ENCODE measurements at regions of chr5 and their contacts with region 1.

Region 1: GRCh38 chr5:68137511-68138140 is 77.9 kb upstream of the PIK3R1 start:
- DNase-seq: no peak

Region 2: DNA sequence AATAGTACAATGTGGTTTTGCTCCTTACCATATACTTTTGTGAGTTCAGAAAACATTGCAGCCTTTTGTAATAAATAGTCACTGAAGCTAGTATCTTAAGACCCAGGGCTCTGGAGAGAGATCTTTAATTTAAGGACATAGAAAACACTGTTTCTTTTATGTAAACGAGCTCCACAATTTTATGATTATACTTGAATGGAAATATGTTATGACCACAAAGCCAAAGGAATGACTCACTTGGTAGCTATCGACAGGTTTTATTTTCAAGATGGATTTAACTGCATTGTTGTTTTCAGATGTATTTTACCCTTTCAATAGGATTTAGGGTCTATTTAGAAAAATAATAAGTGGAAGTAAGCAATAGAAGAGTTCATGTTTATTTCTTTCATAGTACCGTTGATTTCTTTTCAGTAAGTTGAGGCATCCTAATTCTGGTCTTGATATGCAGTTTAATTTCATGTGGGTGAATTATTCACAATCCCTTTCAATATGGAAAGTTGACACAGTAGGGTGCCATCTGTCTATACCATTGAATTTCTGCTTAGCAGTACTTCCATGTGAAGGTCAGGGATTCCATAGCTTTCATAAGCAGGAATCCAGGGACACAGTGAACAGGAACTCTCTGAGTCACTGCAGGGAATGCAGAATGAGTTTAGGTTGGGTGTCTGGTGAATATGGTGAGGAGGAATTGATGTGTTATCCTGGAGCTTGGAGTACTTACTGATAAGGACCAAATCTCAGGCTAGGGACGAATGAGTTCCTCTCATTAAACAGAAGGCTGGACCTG is 1098.6 kb before region 1 on chr5:
- intact Hi-C with region 1: loop called (anchors 10 kb)
- DNase-seq: no peak

Region 3: GRCh38 chr5:68033961-68034571 is 103.6 kb before region 1 on chr5:
- intact Hi-C with region 1: no loop called
- DNase-seq: peak in 1 of 10 donors; percentile 23

Region 4: DNA sequence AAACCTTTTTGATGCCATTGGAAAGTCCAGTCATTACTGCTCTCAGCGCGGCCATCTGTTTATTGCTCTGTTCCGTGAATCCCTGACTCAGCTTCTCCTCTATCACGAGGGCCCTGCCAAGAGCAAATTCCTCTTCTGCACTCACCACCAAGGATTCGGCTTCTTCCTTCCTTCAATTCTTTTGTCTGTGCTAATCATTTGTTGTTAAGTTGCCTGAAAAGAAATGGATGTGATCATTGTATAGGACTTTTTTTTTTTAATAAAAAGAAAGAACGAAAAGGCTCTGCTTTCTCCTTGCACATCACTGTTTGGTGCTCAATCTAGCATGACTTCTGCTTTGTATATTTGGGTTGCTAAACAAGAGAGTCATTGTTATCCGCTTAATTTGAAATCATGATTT is 50.8 kb before region 1 on chr5:
- intact Hi-C with region 1: no loop called
- DNase-seq: peak in 5 of 10 donors; percentile 13 to 86 (median 41)

Region 5: DNA sequence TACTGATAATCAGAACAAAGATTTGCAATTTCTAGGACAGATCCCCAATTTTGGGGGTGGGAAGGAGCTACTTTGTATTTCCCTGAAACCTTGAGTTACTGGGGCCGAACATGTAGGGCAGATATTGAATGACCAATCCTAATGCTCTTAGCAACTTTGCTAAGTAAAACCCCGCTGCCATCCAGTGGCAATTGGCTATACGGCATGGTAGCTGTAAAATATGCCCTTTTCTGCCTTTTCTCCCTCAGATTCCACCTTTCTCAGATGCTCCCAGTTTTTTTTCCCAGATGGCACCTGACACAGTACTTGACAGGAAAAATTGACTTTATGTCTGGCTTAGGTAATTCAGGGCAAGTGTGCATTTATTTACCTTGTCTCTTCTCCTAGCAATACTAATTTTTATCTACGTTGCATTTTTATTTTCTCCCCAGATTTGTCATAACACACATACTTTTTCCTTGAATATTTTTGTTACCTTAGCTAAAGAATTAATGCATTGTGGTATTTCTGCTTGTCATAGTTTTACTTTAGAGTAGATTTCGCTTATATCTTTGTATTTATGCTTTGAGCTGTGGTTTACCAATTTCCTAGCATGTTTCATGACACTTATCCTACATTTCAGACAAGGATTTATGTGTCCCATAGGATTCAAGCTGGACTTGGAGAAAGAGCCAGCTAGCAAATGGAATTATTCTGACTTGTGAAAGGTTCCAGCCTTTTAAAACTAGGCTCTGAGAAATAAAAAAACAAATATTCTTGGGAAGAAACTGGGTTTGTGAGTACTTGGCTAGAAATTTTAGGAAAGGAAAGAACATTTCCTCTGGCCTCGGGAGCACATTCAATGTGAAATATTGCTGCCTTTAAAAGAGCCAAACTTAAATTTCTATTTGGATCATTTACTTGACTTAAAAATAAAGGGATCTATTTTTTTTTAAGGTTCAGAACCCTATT is 115.3 kb after region 1 on chr5:
- intact Hi-C with region 1: no loop called
- DNase-seq: peak in 8 of 10 donors; percentile 48 to 90 (median 64)

Region 6: DNA sequence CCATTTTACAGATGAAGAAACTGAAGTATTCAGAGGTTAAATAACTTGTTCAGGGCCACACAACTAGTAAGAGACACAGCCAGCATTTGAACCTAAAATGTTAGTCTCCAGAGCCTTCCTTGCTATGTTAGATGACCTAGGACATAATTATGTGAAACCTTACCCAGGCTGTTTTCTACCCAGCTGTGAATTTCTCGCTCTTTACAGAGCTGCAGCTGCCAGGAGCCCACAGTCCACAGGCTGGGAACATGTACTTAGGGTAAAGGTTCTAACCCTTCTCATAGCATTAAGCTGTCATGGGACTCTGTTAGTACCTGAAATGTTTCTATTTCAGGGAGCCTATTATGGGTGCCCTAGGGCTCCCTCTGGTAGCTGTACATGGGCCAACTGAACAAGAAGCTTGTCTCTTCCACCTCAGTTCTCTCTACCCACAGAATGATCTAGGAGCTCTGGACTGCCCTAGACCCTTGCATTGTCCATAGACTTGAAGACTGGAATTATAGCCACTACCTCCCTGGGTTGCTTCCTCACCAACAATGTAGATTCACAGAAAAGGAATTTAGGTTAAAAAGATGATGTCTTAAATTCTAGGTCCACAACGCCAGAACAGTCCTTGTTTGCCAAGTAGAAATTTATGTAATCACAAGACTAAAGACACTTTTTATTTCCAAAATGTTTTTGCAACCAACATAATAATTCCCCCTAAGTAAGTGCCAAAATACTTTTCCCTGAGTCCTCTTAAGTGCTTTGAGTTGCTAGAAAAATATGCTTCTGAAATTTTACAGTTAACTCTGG is 340.9 kb after region 1 on chr5:
- intact Hi-C with region 1: no loop called
- DNase-seq: no peak

Measured in posterior cingulate gyrus (tissue), 11 donors.